ENCODE measurements at regions of chr10 and their contacts with region 1.

Region 1: DNA sequence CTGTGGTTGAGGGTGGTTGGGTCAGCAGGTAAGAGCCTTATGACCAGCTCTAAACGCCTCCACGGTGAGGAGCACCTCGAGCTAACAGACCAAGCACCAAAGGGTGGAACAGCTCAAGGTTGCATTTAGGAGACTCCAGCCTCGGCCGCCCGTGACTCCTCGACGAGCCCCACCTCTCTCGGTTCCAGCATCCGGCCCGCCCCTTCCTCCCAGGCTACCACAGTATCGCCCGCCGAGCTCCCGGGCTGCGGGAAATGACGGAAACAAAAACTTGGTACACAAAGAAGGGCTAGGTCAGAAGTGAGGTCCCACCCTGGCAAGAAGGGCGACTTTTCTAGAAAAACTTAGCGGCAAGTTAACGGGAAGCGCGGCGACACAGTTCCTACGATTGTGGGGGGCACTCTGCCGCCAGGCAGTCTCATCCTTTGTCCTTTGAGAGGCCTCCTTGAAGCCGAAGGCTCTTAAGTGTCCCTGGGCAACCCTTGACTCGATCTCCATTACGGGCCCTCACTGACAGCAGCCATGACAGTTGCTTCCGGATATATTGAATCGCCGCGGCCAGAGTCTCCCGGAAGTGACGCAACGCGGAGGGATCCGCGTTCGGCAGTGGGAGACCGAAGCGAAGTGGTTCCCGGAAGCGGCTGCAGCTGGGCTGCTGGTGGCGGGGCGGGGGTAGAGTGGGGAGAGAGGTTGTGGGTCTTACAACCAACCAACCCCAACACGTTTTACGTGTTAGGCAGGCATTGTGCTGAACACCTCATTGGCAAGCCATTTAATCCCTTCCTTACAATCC is 40.2 kb upstream of the ZNF518A start:
- DNase-seq: peak; percentile 95

Region 2: DNA sequence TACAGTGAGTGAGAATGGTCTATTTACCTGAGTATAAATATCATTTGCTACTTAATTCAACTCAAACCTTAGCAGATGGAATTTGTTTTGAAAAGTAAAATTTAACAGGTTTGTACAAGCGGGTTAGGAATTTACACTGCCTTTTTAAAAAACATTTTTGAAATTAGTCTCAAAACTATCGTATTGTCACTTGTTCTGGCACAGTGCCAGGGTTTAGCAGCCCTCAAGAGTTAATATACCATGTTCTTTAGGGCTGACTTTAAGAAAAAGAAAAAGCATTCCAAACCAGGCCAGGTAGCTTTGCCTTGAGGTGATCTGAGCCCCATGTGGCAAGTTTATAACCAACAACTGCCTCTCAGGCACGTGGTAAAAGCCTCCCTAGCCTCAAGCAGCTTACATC is 28.6 kb before region 1 on chr10:
- CTCF ChIA-PET with region 1: no interaction called
- POLR2A ChIA-PET with region 1: interaction called, 16 read pairs
- DNase-seq: no peak

Region 3: GRCh38 chr10:96075977-96076376 is 13.9 kb before region 1 on chr10:
- CTCF ChIA-PET with region 1: no interaction called
- POLR2A ChIA-PET with region 1: interaction called, 13 read pairs
- DNase-seq: no peak

Region 4: GRCh38 chr10:96112531-96112930 is 22.7 kb after region 1 on chr10:
- CTCF ChIA-PET with region 1: no interaction called
- POLR2A ChIA-PET with region 1: no interaction called
- DNase-seq: no peak

Region 5: DNA sequence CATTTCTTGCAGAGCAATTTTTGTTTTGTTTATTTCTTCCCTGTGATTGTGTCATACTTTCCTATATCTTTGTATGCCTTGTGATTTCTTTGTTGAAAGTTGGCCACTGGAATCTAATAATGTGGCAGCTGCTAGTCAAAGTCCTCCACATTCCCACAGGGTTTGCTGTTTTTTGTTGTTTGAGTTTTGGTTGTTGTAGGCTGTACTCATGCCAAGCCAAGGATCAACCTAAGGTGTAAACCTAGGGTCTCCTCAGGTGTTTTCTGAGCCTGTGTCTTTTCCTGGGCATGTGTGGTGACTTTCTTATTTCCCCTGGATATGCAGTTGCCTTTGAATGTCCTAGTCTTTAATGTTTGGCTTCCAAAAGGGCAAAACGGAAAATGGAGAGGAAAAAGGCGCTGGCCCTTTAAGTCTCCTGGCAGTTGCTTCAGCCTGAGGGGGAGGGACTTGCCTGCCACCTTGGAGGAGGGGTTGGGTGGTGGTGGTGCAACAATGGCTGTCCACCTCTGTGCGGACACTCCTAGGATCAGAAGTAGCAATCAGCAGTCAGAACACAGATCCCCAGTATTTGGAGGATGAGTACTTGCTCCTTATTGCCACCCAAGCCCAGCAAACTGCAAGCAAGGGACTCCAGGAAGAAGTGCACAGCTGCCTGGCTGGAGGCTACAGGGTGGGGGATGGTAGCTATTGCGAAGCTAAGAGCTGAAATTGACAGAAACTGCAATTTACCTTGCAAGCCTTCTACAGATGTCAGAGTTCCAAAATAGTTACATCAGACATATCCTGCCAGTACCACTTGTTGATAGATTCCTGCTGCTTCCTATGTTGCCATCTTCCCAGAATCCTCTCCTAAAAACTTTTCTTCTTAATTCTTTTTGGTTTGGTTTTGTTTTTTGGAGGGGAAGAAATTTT is 34.6 kb after region 1 on chr10:
- CTCF ChIA-PET with region 1: interaction called, 3 read pairs
- POLR2A ChIA-PET with region 1: interaction called, 102 read pairs
- DNase-seq: peak; percentile 73

Region 6: DNA sequence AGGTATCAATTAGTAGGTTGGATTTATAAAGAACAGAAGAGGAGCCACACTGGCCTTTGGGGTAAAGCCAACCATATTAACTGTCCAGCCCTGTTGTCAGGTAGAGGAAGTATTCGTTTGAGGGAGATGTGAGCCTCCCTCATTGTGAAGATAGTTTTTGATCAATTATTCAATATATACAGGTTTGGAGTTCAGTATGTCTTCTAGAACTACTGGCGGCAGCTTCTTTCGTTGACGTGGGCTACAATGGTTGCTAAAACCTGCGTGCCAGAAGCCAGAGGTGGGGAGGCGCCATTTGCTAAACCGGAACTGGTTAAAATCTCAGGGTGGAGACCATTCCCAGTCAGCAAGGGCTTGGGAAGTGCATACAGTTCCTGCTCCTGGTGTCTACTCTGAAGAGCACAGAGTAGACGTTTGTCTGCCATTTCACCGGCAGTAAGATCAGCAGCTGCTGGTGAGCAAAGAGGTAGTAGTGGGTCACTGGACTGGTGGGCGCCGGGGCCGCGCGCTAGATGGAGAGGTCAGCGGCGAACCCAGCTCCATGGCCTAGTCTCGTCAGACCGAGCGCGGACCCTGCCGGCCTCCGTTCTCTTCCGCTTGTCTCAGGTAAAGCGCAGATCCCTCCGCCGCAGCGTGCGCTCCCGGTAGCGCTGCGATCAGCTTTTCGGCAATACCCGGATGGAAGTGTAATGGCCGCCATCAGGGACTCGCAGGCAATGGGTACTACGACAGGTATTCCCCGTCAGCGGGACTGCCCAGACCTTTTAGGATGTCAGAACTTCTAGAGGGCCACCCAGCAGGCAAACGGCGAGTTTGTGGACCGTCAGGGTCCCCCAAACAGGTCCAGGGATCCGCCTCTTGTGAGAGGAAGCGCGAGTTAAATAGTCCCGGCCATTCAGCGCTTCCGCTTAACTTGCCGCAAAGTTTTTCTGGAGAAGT is 39.8 kb after region 1 on chr10 and contains the start of gene ZNF518A:
- CTCF ChIA-PET with region 1: interaction called, 3 read pairs
- POLR2A ChIA-PET with region 1: interaction called, 102 read pairs
- DNase-seq: peak; percentile 87

Region 7: DNA sequence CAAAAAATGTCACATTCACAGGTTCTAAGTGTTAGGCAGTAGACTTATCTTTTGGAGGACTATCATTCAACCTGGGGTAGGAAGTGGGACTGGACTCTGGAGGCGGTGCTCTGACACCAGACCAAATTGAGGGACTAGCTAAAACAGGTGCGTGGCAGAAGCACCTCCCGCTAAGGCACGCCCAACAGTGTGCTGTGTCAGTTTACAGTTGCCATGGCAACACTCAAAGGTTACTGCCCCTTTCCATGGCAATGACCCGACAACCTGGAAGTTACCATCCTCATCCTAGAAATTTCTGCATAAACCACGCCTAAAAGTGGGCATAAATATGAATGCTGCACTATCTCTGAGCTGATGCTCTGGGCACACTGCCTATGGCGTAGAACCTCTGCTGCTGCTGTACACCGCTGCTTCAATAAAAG is 195.5 kb after region 1 on chr10:
- CTCF ChIA-PET with region 1: no interaction called
- POLR2A ChIA-PET with region 1: no interaction called
- DNase-seq: no peak

Measured in HEK293T (cell line).